Activated CD4-positive, alpha-beta memory T cell treated with anti-CD3 and anti-CD28 coated beads, Interleukin-2, amount 10 ng/mL, durations not matched to agents 7 days and 5 days (primary cell): ENCODE measurements at regions of chr9 and their contacts with region 1.

Region 1: DNA sequence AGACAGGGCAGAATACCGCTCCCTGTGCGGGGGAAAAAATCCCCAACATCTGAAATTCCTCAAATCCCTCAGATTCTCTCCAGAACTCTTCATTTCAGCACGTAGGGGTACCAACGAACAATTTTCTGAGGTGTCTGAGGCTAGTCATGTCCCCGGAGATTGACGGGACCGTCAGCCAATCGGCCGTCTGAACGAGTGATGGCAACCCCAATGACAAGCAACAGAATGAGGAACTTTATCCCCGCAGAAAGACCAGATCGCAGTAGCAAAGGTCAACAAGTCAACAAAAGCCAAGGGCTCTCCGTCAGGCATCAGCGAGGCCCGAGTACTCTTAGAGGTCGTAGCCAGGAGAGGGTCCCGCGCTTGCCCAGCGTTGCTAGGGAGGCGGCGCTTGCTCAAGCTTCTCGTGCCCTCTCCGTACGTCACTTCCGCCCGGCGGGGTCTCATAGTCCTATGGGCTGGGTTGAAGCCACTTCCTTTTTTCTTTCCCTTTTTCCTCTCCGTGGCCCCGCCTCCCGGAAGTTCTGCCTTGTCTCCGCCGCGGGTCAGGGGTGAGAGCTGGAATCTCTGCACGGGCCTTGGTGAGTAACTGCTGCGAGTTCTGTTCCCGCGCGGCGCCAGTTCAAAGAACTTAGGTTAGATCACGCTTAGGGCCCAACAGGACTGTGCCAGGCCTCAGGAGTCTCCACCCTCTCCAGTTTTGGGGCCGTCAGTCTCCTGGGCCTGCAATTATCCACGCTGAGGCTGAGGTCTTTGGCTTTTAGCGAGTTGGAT is at the start of gene RNF20:
- DNase-seq: peak; percentile 99
- H3K4me3 Mint-ChIP-seq: peak within 1 kb of the TSS; percentile 81
- H3K27ac Mint-ChIP-seq: peak within 1 kb of the TSS; percentile 84
- H3K4me1 Mint-ChIP-seq: peaks cover 34% of the 10 kb centered on the region
- H3K27me3 Mint-ChIP-seq: no peaks in the 10 kb centered on the region
- total RNA-seq, gene RNF20: 43.1 to 43.3 TPM

Region 2: GRCh38 chr9:101265261-101265660 is 268.3 kb before region 1 on chr9:
- CTCF ChIA-PET with region 1: no interaction called
- POLR2A ChIA-PET with region 1: no interaction called
- DNase-seq: no peak
- H3K4me3 Mint-ChIP-seq: no peak overlapping the region
- H3K27ac Mint-ChIP-seq: no peak overlapping the region
- H3K4me1 Mint-ChIP-seq: no peaks in the 10 kb centered on the region
- H3K27me3 Mint-ChIP-seq: no peaks in the 10 kb centered on the region

Region 3: DNA sequence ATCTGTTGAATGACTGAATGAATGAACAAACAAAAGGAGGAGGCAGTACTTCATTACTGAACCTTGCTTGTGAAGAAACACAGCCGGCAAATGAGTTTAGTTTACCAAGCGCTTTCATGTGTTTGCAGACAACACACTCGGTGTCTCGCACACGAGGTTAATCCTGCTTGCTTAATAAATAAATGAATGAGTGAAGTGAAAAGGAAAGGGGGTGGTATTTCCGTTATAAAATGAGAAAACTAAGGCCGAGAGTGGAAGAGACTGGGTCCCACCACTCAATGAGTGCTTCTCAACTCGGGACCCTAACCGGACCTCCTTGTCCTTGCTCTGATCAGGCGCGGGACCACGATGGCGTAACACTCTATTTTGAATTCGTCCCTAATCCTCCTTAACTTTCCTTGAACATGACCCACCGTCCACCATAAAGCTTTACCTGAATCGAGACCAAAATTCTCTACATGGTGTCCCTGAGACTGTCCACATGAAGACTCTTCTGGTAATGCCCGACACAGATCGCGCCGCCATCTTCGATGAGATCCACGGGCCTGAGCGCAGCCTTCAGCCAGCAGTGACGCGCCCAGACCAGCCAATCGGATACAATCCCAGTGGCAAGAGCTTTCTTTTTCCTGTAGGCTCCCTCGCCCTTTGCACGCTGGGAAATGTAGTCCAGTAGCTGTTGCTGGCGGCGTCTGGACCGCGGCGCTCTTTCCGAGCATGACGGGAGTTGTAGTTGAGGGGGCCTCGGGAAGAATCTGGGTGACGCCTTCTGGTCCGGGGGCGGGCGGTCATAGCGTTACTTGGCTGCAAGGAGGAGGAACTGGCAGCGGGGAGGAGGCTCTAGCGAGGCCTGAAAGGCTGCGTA is 135.2 kb before region 1 on chr9 and contains the starts of genes MRPL50 and ZNF189:
- CTCF ChIA-PET with region 1: interaction called, 9 read pairs
- POLR2A ChIA-PET with region 1: interaction called, 27 read pairs
- DNase-seq: peak; percentile 98
- H3K4me3 Mint-ChIP-seq: peak within 1 kb of the TSS; percentile 98
- H3K27ac Mint-ChIP-seq: peak within 1 kb of the TSS; percentile 93
- H3K4me1 Mint-ChIP-seq: peaks cover 51% of the 10 kb centered on the region
- H3K27me3 Mint-ChIP-seq: no peaks in the 10 kb centered on the region
- total RNA-seq, gene MRPL50: 9.2 to 10.2 TPM
- total RNA-seq, gene ZNF189: 13.1 to 13.3 TPM

Region 4: DNA sequence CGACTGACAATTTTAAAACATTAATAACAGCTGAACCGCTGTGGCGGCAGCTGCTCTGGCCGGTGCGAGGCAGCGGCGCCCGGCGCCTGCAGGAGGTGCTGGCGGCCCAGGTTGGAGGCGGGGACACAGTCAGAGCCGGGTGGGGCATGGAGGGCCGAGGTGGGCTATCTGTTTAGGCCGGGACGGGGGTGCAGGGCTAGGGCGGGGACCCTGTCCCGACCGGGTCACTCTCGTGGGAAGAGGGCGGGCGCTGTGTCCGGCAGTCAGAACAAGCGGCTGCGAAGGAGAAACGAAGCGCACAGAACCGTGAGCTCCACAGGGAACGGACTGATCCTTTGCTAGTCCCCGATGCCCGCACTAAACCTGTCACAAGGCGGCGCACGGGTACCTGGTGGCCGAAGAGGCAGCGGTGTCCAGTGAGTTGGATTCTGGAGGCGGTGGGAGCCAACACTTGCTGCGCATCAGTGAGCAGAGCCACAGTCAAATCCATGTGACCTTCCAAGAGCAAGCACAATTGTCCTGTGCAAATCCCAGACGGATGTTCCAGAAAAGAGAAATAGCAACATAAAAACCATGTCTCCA is 84.3 kb before region 1 on chr9:
- CTCF ChIA-PET with region 1: interaction called, 17 read pairs
- POLR2A ChIA-PET with region 1: no interaction called
- DNase-seq: peak; percentile 38
- H3K4me3 Mint-ChIP-seq: peak overlapping the region; percentile 28
- H3K27ac Mint-ChIP-seq: no peak overlapping the region
- H3K4me1 Mint-ChIP-seq: peaks cover 9% of the 10 kb centered on the region
- H3K27me3 Mint-ChIP-seq: peaks cover 40% of the 10 kb centered on the region

Region 5: DNA sequence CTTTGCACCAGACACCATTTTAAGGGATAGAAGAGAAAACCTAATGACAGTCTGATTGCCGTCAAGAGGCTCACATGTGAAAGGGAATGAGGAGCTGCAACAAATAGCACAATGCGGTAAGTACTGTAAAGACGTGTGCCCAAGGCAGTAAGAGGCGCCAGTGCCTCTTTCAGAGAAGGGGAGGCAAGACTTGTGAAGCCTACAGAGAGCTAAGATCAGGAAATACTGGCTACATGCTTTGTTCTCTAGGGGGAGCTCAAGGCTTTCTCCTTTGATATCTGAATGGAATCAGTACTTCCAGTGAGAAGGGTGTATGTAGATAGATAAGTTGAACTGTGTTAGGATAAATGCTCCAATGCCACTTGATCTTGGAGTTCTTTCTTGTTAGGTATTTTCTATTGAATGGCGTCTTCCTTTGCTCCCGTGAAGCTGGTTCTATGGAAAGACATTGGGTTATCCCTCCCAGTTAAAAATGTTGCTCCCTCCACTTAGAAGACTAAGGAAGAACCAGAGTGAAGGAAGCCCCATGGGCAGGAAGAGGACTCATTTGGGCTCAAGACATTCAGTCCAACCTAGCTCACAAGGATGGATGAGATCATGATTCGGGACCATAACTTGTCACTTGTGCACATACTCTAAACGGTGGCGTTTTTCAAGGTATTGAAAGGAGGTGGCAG is 74.4 kb before region 1 on chr9:
- CTCF ChIA-PET with region 1: interaction called, 26 read pairs
- POLR2A ChIA-PET with region 1: interaction called, 3 read pairs
- DNase-seq: peak; percentile 17
- H3K4me3 Mint-ChIP-seq: no peak overlapping the region
- H3K27ac Mint-ChIP-seq: no peak overlapping the region
- H3K4me1 Mint-ChIP-seq: no peaks in the 10 kb centered on the region
- H3K27me3 Mint-ChIP-seq: peaks cover 6% of the 10 kb centered on the region